Heart left ventricle (tissue), 16 donors: ENCODE measurements at regions of chr6 and their contacts with region 1.

Region 1: GRCh38 chr6:131581523-131581922 is 8.5 kb downstream of the ARG1 start:
- DNase-seq: no peak
- ATAC-seq: no peak
- H3K4me3 ChIP-seq: no peak overlapping the region
- H3K27ac ChIP-seq: no peak overlapping the region
- H3K4me1 ChIP-seq: no peaks in the 10 kb centered on the region
- H3K27me3 ChIP-seq: no peaks in the 10 kb centered on the region
- CTCF ChIP-seq: no peak
- POLR2A ChIP-seq: no peak

Region 2: GRCh38 chr6:131615275-131615674 is 33.8 kb after region 1 on chr6:
- intact Hi-C with region 1: loop called in 1 of 10 experiments (anchors 5 kb)
- DNase-seq: no peak
- ATAC-seq: no peak
- H3K4me3 ChIP-seq: no peak overlapping the region
- H3K27ac ChIP-seq: no peak overlapping the region
- H3K4me1 ChIP-seq: no peaks in the 10 kb centered on the region
- H3K27me3 ChIP-seq: no peaks in the 10 kb centered on the region
- CTCF ChIP-seq: no peak
- POLR2A ChIP-seq: no peak